ENCODE measurements at regions of chr16 and their contacts with region 1.

Region 1: GRCh38 chr16:12330946-12331345 is 354.4 kb downstream of the SNX29 start:
- DNase-seq: no peak
- ATAC-seq: no peak
- H3K4me3 ChIP-seq: no peak overlapping the region
- H3K27ac ChIP-seq: no peak overlapping the region
- H3K4me1 ChIP-seq: peaks cover 7 to 8% of the 10 kb centered on the region in 2 donors
- H3K27me3 ChIP-seq: no peaks in the 10 kb centered on the region
- CTCF ChIP-seq: no peak
- POLR2A ChIP-seq: no peak

Region 2: GRCh38 chr16:12257926-12258561 is 72.9 kb before region 1 on chr16:
- in situ Hi-C with region 1: no loop called
- intact Hi-C with region 1: loop called (anchors 10 kb)
- DNase-seq: peak in 1 of 2 donors; percentile 22
- ATAC-seq: peak in 1 of 2 donors; percentile 49
- H3K4me3 ChIP-seq: no peak overlapping the region
- H3K27ac ChIP-seq: no peak overlapping the region
- H3K4me1 ChIP-seq: peaks cover 2 to 7% of the 10 kb centered on the region in 2 donors
- H3K27me3 ChIP-seq: no peaks in the 10 kb centered on the region
- CTCF ChIP-seq: no peak
- POLR2A ChIP-seq: no peak

Region 3: DNA sequence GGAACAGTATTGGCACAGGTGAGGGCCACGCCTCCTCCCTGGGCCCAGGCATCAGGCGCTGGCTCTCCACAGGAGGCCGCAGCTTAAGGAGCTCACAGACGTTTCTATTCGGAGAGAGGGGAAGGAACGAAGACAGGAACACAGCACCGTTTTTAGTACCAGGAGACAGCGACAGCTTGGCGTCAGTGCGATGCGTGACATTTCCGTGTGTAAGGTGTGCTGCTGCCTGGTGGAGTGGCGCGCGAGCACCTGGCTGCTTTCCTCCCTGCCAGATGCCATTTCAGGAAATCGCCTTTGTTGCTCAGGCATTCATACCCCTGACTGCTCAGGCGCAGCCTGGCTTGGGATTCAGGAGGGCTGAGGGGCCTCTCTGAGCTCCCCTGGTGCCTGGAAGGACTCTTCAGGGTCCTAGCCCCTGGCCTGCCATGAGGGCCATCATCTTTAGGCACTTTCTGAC is 105.3 kb after region 1 on chr16:
- in situ Hi-C with region 1: no loop called
- intact Hi-C with region 1: no loop called
- DNase-seq: no peak
- ATAC-seq: no peak
- H3K4me3 ChIP-seq: no peak overlapping the region
- H3K27ac ChIP-seq: no peak overlapping the region
- H3K4me1 ChIP-seq: peaks cover 0 to 5% of the 10 kb centered on the region in 2 donors
- H3K27me3 ChIP-seq: no peaks in the 10 kb centered on the region
- CTCF ChIP-seq: no peak
- POLR2A ChIP-seq: no peak